Naive thymus-derived CD4-positive, alpha-beta T cell (primary cell): ENCODE measurements at regions of chr2 and their contacts with region 1.

Region 1: GRCh38 chr2:227106845-227107759 is 56.9 kb downstream of the COL4A4 start:
- DNase-seq: peak in 5 of 9 donors; percentile 4 to 26 (median 14)
- ATAC-seq: peak; percentile 50
- H3K4me3 ChIP-seq: no peak overlapping the region
- H3K4me3 Mint-ChIP-seq: no peak overlapping the region
- H3K27ac ChIP-seq: no peak overlapping the region
- H3K27ac Mint-ChIP-seq: no peak overlapping the region
- H3K4me1 ChIP-seq: no peaks in the 10 kb centered on the region
- H3K4me1 Mint-ChIP-seq: no peaks in the 10 kb centered on the region
- H3K27me3 ChIP-seq: no peaks in the 10 kb centered on the region
- H3K27me3 Mint-ChIP-seq: peaks cover 0 to 7% (median 0%) of the 10 kb centered on the region in 5 donors

Region 2: GRCh38 chr2:225282858-225283710 is 1824.0 kb before region 1 on chr2:
- CTCF ChIA-PET with region 1: no interaction called
- POLR2A ChIA-PET with region 1: no interaction called
- intact Hi-C with region 1: loop called (anchors 2 to 5 kb)
- DNase-seq: peak in 5 of 9 donors; percentile 11 to 29 (median 20)
- ATAC-seq: peak; percentile 48
- H3K4me3 ChIP-seq: no peak overlapping the region
- H3K4me3 Mint-ChIP-seq: no peak overlapping the region
- H3K27ac ChIP-seq: no peak overlapping the region
- H3K27ac Mint-ChIP-seq: no peak overlapping the region
- H3K4me1 ChIP-seq: no peaks in the 10 kb centered on the region
- H3K4me1 Mint-ChIP-seq: peaks cover 0 to 8% (median 0%) of the 10 kb centered on the region in 7 donors
- H3K27me3 ChIP-seq: no peaks in the 10 kb centered on the region
- H3K27me3 Mint-ChIP-seq: peaks cover 0 to 2% (median 0%) of the 10 kb centered on the region in 5 donors

Region 3: GRCh38 chr2:226813148-226813701 is 293.9 kb before region 1 on chr2:
- CTCF ChIA-PET with region 1: no interaction called
- POLR2A ChIA-PET with region 1: no interaction called
- intact Hi-C with region 1: loop called in 1 of 2 experiments (anchors 2 kb)
- DNase-seq: no peak
- ATAC-seq: no peak
- H3K4me3 ChIP-seq: no peak overlapping the region
- H3K4me3 Mint-ChIP-seq: no peak overlapping the region
- H3K27ac ChIP-seq: no peak overlapping the region
- H3K27ac Mint-ChIP-seq: no peak overlapping the region
- H3K4me1 ChIP-seq: no peaks in the 10 kb centered on the region
- H3K4me1 Mint-ChIP-seq: no peaks in the 10 kb centered on the region
- H3K27me3 ChIP-seq: no peaks in the 10 kb centered on the region
- H3K27me3 Mint-ChIP-seq: peaks cover 21 to 46% (median 42%) of the 10 kb centered on the region in 5 donors

Region 4: DNA sequence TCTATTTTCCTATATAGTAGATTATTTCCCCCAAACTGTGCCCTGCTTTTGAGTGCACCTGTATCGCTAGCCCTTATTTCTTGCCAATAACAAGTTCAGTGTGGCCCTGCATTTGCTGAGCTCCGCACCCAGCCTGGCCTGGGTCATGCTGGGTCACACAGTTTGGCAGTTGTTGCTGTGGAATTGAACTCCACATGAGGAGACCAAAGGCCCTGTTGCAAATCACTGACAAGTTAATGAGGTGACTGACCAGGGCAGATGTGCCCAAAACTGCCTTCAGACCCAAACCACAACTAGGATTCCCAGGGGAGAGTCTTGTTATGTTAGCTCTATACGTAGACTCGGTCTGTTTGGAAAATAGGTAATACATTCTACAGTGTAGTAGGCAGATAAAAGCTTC is 25.9 kb after region 1 on chr2:
- CTCF ChIA-PET with region 1: no interaction called
- POLR2A ChIA-PET with region 1: no interaction called
- intact Hi-C with region 1: no loop called
- DNase-seq: no peak
- ATAC-seq: no peak
- H3K4me3 ChIP-seq: no peak overlapping the region
- H3K4me3 Mint-ChIP-seq: no peak overlapping the region
- H3K27ac ChIP-seq: no peak overlapping the region
- H3K27ac Mint-ChIP-seq: no peak overlapping the region
- H3K4me1 ChIP-seq: no peaks in the 10 kb centered on the region
- H3K4me1 Mint-ChIP-seq: no peaks in the 10 kb centered on the region
- H3K27me3 ChIP-seq: no peaks in the 10 kb centered on the region
- H3K27me3 Mint-ChIP-seq: peaks cover 2 to 39% (median 11%) of the 10 kb centered on the region in 5 donors

Region 5: DNA sequence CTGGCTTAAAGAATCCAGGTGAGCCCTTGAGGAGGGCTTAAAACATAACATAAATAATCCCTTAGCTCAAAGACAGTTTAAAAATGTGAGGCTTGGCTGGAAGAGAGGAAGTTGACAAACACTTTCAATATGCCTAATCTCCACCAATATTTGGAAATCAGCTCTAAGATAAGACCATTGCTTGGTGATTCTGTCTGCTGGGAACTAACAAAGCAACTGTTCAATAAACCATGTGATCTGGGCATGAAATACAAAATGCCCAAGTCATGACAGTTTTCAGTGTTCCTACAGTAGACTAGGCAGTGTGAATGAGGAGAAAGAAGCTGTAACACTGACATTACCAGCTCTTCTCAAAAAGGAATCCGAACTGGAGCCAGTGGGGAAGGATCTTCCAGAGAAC is 228.6 kb after region 1 on chr2:
- CTCF ChIA-PET with region 1: no interaction called
- POLR2A ChIA-PET with region 1: no interaction called
- intact Hi-C with region 1: no loop called
- DNase-seq: no peak
- ATAC-seq: no peak
- H3K4me3 ChIP-seq: no peak overlapping the region
- H3K4me3 Mint-ChIP-seq: no peak overlapping the region
- H3K27ac ChIP-seq: no peak overlapping the region
- H3K27ac Mint-ChIP-seq: no peak overlapping the region
- H3K4me1 ChIP-seq: no peaks in the 10 kb centered on the region
- H3K4me1 Mint-ChIP-seq: peaks cover 2 to 15% (median 8%) of the 10 kb centered on the region in 7 donors
- H3K27me3 ChIP-seq: no peaks in the 10 kb centered on the region
- H3K27me3 Mint-ChIP-seq: no peaks in the 10 kb centered on the region